Heart left ventricle (tissue), 16 donors: ENCODE measurements at regions of chr19 and their contacts with region 1.

Region 1: GRCh38 chr19:17346109-17346671 is 8.8 kb downstream of the GTPBP3 start:
- DNase-seq: peak; percentile 70 to 88 (median 75)
- ATAC-seq: peak; percentile 51 to 79 (median 72)
- H3K4me3 ChIP-seq: no peak overlapping the region
- H3K27ac ChIP-seq: peak overlapping the region in 10 of 12 donors; percentile 23 to 84 (median 68)
- H3K4me1 ChIP-seq: peaks cover 0 to 45% (median 30%) of the 10 kb centered on the region in 12 donors
- H3K27me3 ChIP-seq: no peaks in the 10 kb centered on the region
- CTCF ChIP-seq: peak; percentile 88 to 97 (median 96)
- POLR2A ChIP-seq: no peak

Region 2: DNA sequence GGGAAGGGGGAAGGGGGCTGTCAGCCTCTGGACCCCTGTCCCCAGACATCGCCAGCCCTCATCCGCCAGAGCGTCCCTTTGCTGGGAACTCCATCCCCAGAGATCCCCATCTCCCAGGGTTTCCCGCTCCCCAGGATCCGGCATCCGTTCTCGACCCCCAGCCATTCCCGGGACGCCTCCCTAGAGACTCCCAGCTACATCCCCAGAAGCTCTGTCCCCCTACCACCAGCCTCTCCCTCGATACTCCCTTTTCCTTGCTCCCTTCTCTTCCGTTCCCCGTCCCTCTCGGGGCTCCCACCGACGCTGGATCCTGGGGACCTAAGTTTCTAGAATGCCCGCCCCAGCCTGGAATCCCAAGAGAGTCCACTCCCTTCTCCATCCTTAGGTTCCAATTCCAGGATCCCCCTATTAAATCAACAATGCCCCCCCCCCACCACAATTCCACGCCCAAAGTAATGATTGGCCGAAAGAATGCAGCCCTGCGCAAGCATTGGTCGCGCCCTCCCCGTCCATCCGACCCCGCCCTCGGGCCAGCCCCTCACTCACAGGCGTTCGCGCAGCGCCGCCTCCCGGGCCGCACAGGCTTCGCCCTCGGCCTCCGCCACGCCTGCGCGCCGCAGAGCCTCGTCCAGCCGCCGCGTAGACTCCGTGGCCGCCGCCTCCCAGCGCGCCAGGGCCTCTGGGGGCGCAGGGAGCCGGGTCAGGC is 44.6 kb after region 1 on chr19:
- intact Hi-C with region 1: loop called in 7 of 10 experiments (anchors 1 to 2 kb)
- DNase-seq: peak; percentile 93 to 96 (median 94)
- ATAC-seq: peak; percentile 91 to 99 (median 98)
- H3K4me3 ChIP-seq: peak overlapping the region; percentile 8 to 70 (median 50)
- H3K27ac ChIP-seq: peak overlapping the region in 4 of 12 donors; percentile 3 to 28 (median 7)
- H3K4me1 ChIP-seq: peaks cover 2 to 44% (median 17%) of the 10 kb centered on the region in 12 donors
- H3K27me3 ChIP-seq: peaks cover 0 to 16% (median 7%) of the 10 kb centered on the region in 9 donors
- CTCF ChIP-seq: peak; percentile 45 to 88 (median 79)
- POLR2A ChIP-seq: peak in 1 of 2 donors; percentile 36

Region 3: GRCh38 chr19:17460372-17461230 is 114.4 kb after region 1 on chr19 and contains the start of gene NXNL1:
- intact Hi-C with region 1: loop called in 6 of 10 experiments (anchors 2 to 10 kb)
- DNase-seq: peak in 1 of 5 donors; percentile 33
- ATAC-seq: no peak
- H3K4me3 ChIP-seq: no peak within 1 kb of the TSS
- H3K27ac ChIP-seq: no peak within 1 kb of the TSS
- H3K4me1 ChIP-seq: peaks cover 0 to 4% (median 0%) of the 10 kb centered on the region in 12 donors
- H3K27me3 ChIP-seq: peaks cover 10 to 55% (median 23%) of the 10 kb centered on the region in 9 donors
- CTCF ChIP-seq: no peak
- POLR2A ChIP-seq: no peak
- total RNA-seq, gene NXNL1: 0.32 to 1.1 (median 0.57) TPM in 4 of 9 donors, not detected in the others